ENCODE measurements at regions of chr15 and their contacts with region 1.

Region 1: GRCh38 chr15:65832549-65833364 is 36.5 kb upstream of the RAB11A start:
- DNase-seq: peak; percentile 99
- H3K4me3 ChIP-seq: peak overlapping the region in 1 of 3 experiments; percentile 20
- H3K27ac ChIP-seq: peak overlapping the region; percentile 63
- H3K4me1 ChIP-seq: peaks cover 31% of the 10 kb centered on the region
- H3K27me3 ChIP-seq: no peaks in the 10 kb centered on the region
- CTCF ChIP-seq: peak; percentile 15 to 26
- POLR2A ChIP-seq: no peak

Region 2: DNA sequence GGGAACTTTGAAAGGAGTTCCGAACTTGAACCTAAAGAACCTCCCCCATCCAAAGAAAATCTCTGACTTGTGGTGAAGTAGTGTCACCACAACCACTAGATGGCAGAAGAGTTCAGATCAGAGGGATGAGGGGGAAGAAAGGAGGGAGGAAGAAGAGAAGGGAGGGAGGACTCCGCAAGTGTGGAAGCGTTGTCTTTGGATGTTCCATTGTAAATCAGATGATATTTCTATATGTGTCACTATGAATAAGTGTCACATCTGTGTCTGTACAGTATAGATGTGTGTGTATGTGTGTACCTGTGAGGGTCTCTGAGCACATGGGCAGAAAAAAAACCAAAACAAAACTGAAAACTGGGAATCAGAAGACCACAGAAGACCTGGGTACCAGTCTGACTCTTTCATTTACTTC is 194.1 kb before region 1 on chr15:
- CTCF ChIA-PET with region 1: interaction called, 13 read pairs
- POLR2A ChIA-PET with region 1: no interaction called
- dilution Hi-C with region 1: no loop called
- intact Hi-C with region 1: loop called (anchors 1 kb)
- DNase-seq: peak; percentile 74
- H3K4me3 ChIP-seq: no peak overlapping the region
- H3K27ac ChIP-seq: no peak overlapping the region
- H3K4me1 ChIP-seq: peaks cover 20% of the 10 kb centered on the region
- H3K27me3 ChIP-seq: no peaks in the 10 kb centered on the region
- CTCF ChIP-seq: peak; percentile 72
- POLR2A ChIP-seq: no peak

Region 3: DNA sequence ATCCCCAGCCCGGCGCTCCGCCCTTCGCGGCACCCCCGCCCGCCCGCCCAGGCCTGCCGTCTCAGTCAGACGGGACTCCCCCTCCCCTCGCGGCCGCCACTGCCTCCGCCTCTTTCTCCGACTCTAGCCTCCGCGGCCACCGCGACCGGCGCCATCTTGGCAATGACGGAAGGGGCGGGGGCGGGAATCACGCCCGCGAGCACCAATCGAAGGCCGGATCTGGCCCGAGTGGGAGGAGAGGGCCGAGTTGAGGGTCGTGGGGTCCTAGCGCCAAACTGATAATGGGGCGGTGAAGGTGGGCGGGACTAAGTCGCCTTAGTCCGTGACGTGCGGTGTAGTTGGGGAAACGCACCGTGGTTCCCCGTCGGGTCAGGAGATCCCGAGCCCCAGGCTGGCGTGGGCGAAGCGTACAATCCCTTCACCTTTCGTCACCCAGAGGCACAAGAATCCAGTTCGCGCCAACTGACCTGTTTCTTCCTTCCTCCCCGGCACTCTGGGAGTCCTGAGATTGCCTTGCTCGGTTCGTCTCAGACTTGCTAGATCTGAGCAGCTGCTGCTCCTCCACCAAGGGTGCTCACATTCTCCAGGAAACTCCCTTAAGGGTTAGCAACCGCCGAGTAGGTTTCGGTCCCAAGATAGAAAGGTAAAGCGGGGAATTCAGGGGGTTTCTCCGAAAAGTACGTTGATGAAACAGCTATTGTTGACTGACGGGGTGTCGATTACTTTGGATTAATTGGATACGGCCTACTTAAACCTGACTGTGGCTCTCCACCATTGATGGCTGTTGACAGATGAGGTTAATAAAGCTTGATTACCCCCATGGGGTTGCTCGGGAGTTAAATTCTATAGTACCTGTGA is 40.4 kb before region 1 on chr15 and contains the start of gene DENND4A:
- CTCF ChIA-PET with region 1: interaction called, 7 read pairs
- POLR2A ChIA-PET with region 1: interaction called, 5 read pairs
- dilution Hi-C with region 1: no loop called
- intact Hi-C with region 1: loop called (anchors 2 kb)
- DNase-seq: peak; percentile 99
- H3K4me3 ChIP-seq: peak within 1 kb of the TSS; percentile 85 to 91 (median 89)
- H3K27ac ChIP-seq: peak within 1 kb of the TSS; percentile 81
- H3K4me1 ChIP-seq: peaks cover 40% of the 10 kb centered on the region
- H3K27me3 ChIP-seq: no peaks in the 10 kb centered on the region
- CTCF ChIP-seq: no peak
- POLR2A ChIP-seq: peak; percentile 84
- total RNA-seq, gene DENND4A: 22.2 and 25.2 TPM in 2 replicates

Region 4: DNA sequence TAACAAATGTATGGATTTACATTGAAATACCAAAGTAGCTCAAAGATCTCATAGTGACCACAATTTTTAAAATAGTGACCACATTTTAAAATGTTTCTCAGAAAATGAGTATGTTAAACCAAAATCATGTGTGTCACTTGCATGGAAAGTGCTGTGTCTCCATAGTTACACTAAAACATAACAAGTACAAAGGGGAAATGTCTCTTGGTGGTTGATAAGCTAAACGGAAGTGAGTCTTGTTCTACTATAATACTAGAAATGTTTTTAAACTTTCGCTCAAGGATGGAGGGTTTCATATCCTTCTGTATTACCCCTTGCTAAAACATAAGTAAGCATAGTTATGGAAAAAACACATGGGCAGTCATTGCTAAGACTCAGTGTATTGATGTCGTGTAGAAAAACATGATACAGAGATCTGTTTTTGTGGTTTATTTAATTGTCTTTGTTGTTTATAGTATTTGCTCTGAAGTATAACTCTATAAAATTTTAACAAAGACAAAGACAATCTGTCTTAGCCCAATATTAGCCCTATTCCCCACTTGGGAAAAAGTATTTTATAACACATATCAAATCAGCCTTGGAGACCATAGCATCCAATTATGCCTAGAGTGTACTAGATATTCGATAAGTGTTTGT is 13.7 kb before region 1 on chr15:
- CTCF ChIA-PET with region 1: interaction called, 24 read pairs
- POLR2A ChIA-PET with region 1: interaction called, 4 read pairs
- dilution Hi-C with region 1: no loop called
- intact Hi-C with region 1: loop called (anchors 2 kb)
- DNase-seq: peak; percentile 95
- H3K4me3 ChIP-seq: no peak overlapping the region
- H3K27ac ChIP-seq: peak overlapping the region; percentile 88
- H3K4me1 ChIP-seq: peaks cover 20% of the 10 kb centered on the region
- H3K27me3 ChIP-seq: no peaks in the 10 kb centered on the region
- CTCF ChIP-seq: no peak
- POLR2A ChIP-seq: no peak

Region 5: DNA sequence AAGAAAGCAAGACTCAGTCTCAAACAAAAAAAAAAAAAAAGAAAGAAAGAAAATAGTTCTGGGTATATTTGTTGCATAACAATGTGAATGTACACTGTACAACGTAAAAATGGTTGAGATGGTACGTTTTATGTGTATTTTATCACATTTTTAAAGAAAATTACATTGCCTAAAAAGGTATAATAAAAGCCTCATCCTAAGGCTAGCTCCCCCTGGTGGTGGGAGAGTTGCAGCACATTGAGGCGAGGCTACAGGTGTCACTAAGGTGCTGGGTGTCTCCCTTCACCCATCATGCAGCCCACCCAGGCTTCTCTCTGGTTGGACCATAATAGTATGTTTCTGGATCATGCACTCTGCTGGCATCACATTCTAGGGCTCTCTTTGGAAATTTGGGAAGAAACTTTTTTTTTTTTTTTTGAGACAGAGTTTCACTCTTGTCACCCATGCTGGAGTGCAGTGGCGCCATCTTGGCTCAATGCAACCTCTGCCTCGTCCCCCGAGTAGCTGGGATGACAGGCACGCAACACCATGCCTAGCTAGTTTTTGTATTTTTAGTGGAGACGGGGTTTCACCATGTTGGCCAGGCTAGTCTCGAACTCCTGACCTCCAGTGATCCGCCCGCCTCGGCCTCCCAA is 24.2 kb after region 1 on chr15:
- CTCF ChIA-PET with region 1: interaction called, 26 read pairs
- POLR2A ChIA-PET with region 1: no interaction called
- dilution Hi-C with region 1: no loop called
- intact Hi-C with region 1: loop called (anchors 2 kb)
- DNase-seq: peak; percentile 49
- H3K4me3 ChIP-seq: no peak overlapping the region
- H3K27ac ChIP-seq: no peak overlapping the region
- H3K4me1 ChIP-seq: no peaks in the 10 kb centered on the region
- H3K27me3 ChIP-seq: no peaks in the 10 kb centered on the region
- CTCF ChIP-seq: peak; percentile 74 to 81
- POLR2A ChIP-seq: no peak

Measured in endothelial cell of umbilical vein (primary cell).